K562 (cell line): ENCODE measurements at regions of chr9 and their contacts with region 1.

Region 1: GRCh38 chr9:122551371-122551770 is 1.5 kb upstream of the OR1N2 start:
- DNase-seq: no peak
- ATAC-seq: no peak
- H3K4me3 ChIP-seq: no peak overlapping the region
- H3K27ac ChIP-seq: no peak overlapping the region
- H3K4me1 ChIP-seq: no peaks in the 10 kb centered on the region
- H3K27me3 ChIP-seq: peaks cover 0 to 3% of the 10 kb centered on the region in 2 experiments; a peak in 1 of 5 replicates
- CTCF ChIP-seq: no peak
- EP300 ChIP-seq: no peak
- POLR2A ChIP-seq: no peak
- RAD21 ChIP-seq: no peak

Region 2: DNA sequence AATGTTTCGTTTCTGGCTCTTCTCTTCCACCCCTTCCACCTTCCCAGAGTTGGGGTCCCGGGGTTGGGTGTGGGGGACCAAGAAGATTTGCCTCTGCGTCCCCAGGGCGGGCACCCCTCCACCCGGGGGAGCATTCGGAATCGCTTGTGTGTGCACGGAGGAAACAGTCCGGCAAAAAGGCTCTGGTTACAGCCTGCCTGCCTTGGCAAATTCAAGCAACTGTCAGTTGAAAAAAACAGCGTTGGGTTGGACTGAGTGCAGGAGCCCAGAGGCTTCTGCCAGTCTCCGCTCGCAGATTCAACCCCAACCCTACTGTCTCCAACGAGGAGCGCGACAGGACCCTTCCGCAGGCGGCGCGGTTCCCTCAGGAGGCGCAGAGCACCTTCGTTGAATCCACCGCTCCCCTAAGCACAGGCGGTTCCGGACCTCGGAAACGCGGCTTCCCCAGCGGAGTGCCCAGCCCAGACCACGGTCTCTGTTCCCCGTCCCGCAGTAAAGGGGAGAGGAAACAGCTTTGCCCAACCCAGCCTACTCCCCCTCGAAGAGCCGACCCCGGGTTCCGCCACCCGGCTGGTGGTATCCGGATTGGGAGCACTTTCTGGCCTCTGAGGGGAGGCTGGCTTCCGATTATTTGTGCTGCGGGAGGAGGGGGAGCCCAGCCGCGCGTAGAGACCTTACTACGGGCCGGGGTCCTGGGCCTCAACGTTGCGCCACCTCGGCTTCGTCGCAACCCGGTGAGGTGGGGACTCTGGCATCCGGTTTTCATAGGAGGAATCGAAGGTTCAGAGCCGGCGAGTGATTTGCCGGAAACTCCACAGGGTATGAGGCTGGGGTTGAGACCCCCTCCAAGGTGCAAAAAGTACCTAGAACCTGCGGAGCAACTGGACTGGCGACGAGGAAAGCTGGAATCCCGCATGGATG is 332.2 kb before region 1 on chr9:
- CTCF ChIA-PET with region 1: no interaction called
- POLR2A ChIA-PET with region 1: no interaction called
- in situ Hi-C with region 1: no loop called
- intact Hi-C with region 1: no loop called
- DNase-seq: no peak
- ATAC-seq: no peak
- H3K4me3 ChIP-seq: no peak overlapping the region
- H3K27ac ChIP-seq: no peak overlapping the region
- H3K4me1 ChIP-seq: peaks cover 23 to 31% of the 10 kb centered on the region in 2 experiments
- H3K27me3 ChIP-seq: no peaks in the 10 kb centered on the region
- CTCF ChIP-seq: no peak
- EP300 ChIP-seq: no peak
- POLR2A ChIP-seq: no peak
- RAD21 ChIP-seq: no peak

Region 3: GRCh38 chr9:122609806-122610205 is 58.4 kb after region 1 on chr9:
- CTCF ChIA-PET with region 1: no interaction called
- POLR2A ChIA-PET with region 1: no interaction called
- in situ Hi-C with region 1: no loop called
- intact Hi-C with region 1: loop called (anchors 5 kb)
- DNase-seq: peak in 1 of 4 experiments; percentile 8
- ATAC-seq: no peak
- H3K4me3 ChIP-seq: no peak overlapping the region
- H3K27ac ChIP-seq: no peak overlapping the region
- H3K4me1 ChIP-seq: no peaks in the 10 kb centered on the region
- H3K27me3 ChIP-seq: peaks cover 0 to 13% of the 10 kb centered on the region in 2 experiments; a peak in 3 of 5 replicates
- CTCF ChIP-seq: no peak
- EP300 ChIP-seq: no peak
- POLR2A ChIP-seq: no peak
- RAD21 ChIP-seq: no peak

Region 4: GRCh38 chr9:122767817-122768216 is 216.4 kb after region 1 on chr9:
- CTCF ChIA-PET with region 1: no interaction called
- POLR2A ChIA-PET with region 1: no interaction called
- in situ Hi-C with region 1: no loop called
- intact Hi-C with region 1: no loop called
- DNase-seq: no peak
- ATAC-seq: no peak
- H3K4me3 ChIP-seq: no peak overlapping the region
- H3K27ac ChIP-seq: no peak overlapping the region
- H3K4me1 ChIP-seq: no peaks in the 10 kb centered on the region
- H3K27me3 ChIP-seq: no peaks in the 10 kb centered on the region
- CTCF ChIP-seq: no peak
- EP300 ChIP-seq: no peak
- POLR2A ChIP-seq: no peak
- RAD21 ChIP-seq: no peak